ENCODE measurements at regions of chr12 and their contacts with region 1.

Region 1: GRCh38 chr12:107511292-107511691 is 174.3 kb upstream of the PWP1 start:
- DNase-seq: no peak
- H3K4me3 ChIP-seq: no peak overlapping the region
- H3K27ac ChIP-seq: no peak overlapping the region
- H3K4me1 ChIP-seq: peaks cover 7% of the 10 kb centered on the region
- H3K27me3 ChIP-seq: no peaks in the 10 kb centered on the region
- CTCF ChIP-seq: no peak

Region 2: DNA sequence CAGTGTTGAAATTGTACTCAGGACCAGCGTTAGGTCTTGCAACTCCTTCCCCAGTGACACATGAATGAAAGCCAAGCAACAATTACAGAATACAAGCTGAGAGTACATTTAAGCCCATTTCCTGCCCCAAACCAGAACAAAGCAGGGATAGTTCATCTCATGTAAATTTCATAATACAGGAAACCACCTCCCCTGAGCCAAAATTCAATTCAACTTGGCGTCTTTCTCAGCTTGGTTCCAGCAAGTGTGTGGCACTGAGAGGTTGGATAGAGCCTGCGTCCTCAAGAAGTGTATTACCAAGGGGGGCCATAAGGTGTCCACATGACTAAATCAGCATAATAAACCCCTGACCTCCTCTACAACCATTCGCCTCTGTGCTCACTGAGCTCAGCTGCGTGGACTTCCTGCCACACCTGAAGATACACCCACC is 139.0 kb before region 1 on chr12:
- CTCF ChIA-PET with region 1: no interaction called
- POLR2A ChIA-PET with region 1: interaction called, 12 read pairs
- intact Hi-C with region 1: no loop called
- DNase-seq: peak; percentile 97
- H3K4me3 ChIP-seq: no peak overlapping the region
- H3K27ac ChIP-seq: no peak overlapping the region
- H3K4me1 ChIP-seq: peaks cover 56% of the 10 kb centered on the region
- H3K27me3 ChIP-seq: no peaks in the 10 kb centered on the region
- CTCF ChIP-seq: peak; percentile 32